Naive thymus-derived CD4-positive, alpha-beta T cell (primary cell): ENCODE measurements at regions of chr15 and their contacts with region 1.

Region 1: GRCh38 chr15:45037936-45038335 is 14.9 kb downstream of the SORD start:
- DNase-seq: no peak
- ATAC-seq: no peak
- H3K4me3 ChIP-seq: no peak overlapping the region
- H3K4me3 Mint-ChIP-seq: no peak overlapping the region
- H3K27ac ChIP-seq: no peak overlapping the region
- H3K27ac Mint-ChIP-seq: peak overlapping the region in 1 of 9 donors; percentile 59
- H3K4me1 ChIP-seq: no peaks in the 10 kb centered on the region
- H3K4me1 Mint-ChIP-seq: peaks cover 8 to 23% (median 18%) of the 10 kb centered on the region in 7 donors
- H3K27me3 ChIP-seq: no peaks in the 10 kb centered on the region
- H3K27me3 Mint-ChIP-seq: peaks cover 0 to 4% (median 0%) of the 10 kb centered on the region in 5 donors

Region 2: DNA sequence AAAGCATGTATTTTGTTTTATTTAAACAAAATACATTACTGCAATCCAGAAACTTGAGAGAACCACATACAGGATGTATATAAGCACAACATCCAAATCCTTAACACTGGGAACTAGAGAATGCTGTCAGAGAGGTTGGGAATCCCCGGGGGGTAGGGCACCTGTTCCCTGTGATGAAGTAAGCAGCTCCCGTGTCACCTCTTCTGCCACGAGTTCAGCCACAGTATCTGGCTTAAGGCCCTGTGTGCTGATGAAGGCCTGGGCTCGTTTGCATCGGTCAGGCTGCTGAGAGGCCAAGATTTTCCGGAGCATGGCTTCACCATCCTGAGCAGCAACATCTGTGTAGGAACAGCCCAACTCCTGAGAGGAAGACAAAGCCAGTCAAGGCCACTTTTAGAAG is 464.6 kb before region 1 on chr15:
- CTCF ChIA-PET with region 1: no interaction called
- POLR2A ChIA-PET with region 1: no interaction called
- intact Hi-C with region 1: loop called (anchors 1 to 2 kb)
- DNase-seq: no peak
- ATAC-seq: no peak
- H3K4me3 ChIP-seq: no peak overlapping the region
- H3K4me3 Mint-ChIP-seq: no peak overlapping the region
- H3K27ac ChIP-seq: peak overlapping the region; percentile 29
- H3K27ac Mint-ChIP-seq: peak overlapping the region in 4 of 9 donors; percentile 14 to 62 (median 33)
- H3K4me1 ChIP-seq: peaks cover 0 to 2% of the 10 kb centered on the region in 2 donors
- H3K4me1 Mint-ChIP-seq: peaks cover 4 to 11% (median 9%) of the 10 kb centered on the region in 7 donors
- H3K27me3 ChIP-seq: no peaks in the 10 kb centered on the region
- H3K27me3 Mint-ChIP-seq: no peaks in the 10 kb centered on the region

Region 3: GRCh38 chr15:44584162-44584749 is 453.7 kb before region 1 on chr15:
- CTCF ChIA-PET with region 1: no interaction called
- POLR2A ChIA-PET with region 1: no interaction called
- intact Hi-C with region 1: loop called in 1 of 2 experiments (anchors 2 kb)
- DNase-seq: peak; percentile 21 to 56 (median 46)
- ATAC-seq: peak; percentile 89
- H3K4me3 ChIP-seq: no peak overlapping the region
- H3K4me3 Mint-ChIP-seq: no peak overlapping the region
- H3K27ac ChIP-seq: no peak overlapping the region
- H3K27ac Mint-ChIP-seq: peak overlapping the region in 4 of 9 donors; percentile 33 to 70 (median 61)
- H3K4me1 ChIP-seq: peaks cover 0 to 1% of the 10 kb centered on the region in 2 donors
- H3K4me1 Mint-ChIP-seq: peaks cover 3 to 25% (median 18%) of the 10 kb centered on the region in 7 donors
- H3K27me3 ChIP-seq: no peaks in the 10 kb centered on the region
- H3K27me3 Mint-ChIP-seq: no peaks in the 10 kb centered on the region

Region 4: GRCh38 chr15:44593042-44593736 is 444.7 kb before region 1 on chr15:
- CTCF ChIA-PET with region 1: no interaction called
- POLR2A ChIA-PET with region 1: no interaction called
- intact Hi-C with region 1: loop called in 1 of 2 experiments (anchors 1 kb)
- DNase-seq: peak in 7 of 9 donors; percentile 19 to 63 (median 57)
- ATAC-seq: peak; percentile 83
- H3K4me3 ChIP-seq: no peak overlapping the region
- H3K4me3 Mint-ChIP-seq: no peak overlapping the region
- H3K27ac ChIP-seq: no peak overlapping the region
- H3K27ac Mint-ChIP-seq: peak overlapping the region in 8 of 9 donors; percentile 19 to 92 (median 52)
- H3K4me1 ChIP-seq: peaks cover 0 to 1% of the 10 kb centered on the region in 2 donors
- H3K4me1 Mint-ChIP-seq: peaks cover 3 to 19% (median 12%) of the 10 kb centered on the region in 7 donors
- H3K27me3 ChIP-seq: no peaks in the 10 kb centered on the region
- H3K27me3 Mint-ChIP-seq: no peaks in the 10 kb centered on the region

Region 5: DNA sequence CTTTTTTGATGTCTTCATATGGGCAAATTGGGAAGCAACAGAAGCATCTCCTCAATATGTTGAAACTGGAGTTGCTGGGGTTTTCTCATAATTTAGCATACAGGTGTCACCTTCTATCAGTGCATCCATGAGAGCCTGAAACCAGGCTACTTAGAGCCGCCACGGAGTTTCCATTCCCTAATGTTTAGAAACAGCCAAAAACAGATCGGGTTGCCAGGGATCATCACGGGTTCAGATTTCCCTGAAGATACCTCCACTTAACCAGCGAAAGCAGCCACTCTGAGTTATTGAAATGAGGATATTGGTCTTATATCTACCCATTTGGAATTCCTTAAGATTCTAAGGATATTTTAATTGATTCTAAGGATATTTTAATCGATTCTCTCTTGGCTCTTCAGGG is 66.9 kb before region 1 on chr15:
- CTCF ChIA-PET with region 1: interaction called, 8 read pairs
- POLR2A ChIA-PET with region 1: no interaction called
- intact Hi-C with region 1: loop called (anchors 1 to 2 kb)
- DNase-seq: no peak
- ATAC-seq: no peak
- H3K4me3 ChIP-seq: no peak overlapping the region
- H3K4me3 Mint-ChIP-seq: no peak overlapping the region
- H3K27ac ChIP-seq: no peak overlapping the region
- H3K27ac Mint-ChIP-seq: no peak overlapping the region
- H3K4me1 ChIP-seq: no peaks in the 10 kb centered on the region
- H3K4me1 Mint-ChIP-seq: no peaks in the 10 kb centered on the region
- H3K27me3 ChIP-seq: no peaks in the 10 kb centered on the region
- H3K27me3 Mint-ChIP-seq: peaks cover 0 to 16% (median 0%) of the 10 kb centered on the region in 5 donors